ENCODE measurements at regions of chr6 and their contacts with region 1.

Region 1: GRCh38 chr6:170291271-170292110 is 613 bp upstream of the DLL1 start:
- DNase-seq: peak; percentile 69 to 75
- ATAC-seq: peak; percentile 23 to 63 (median 58)
- H3K4me3 ChIP-seq: peak overlapping the region; percentile 84
- H3K27ac ChIP-seq: peak overlapping the region; percentile 6
- H3K4me1 ChIP-seq: peaks cover 38% of the 10 kb centered on the region
- H3K27me3 ChIP-seq: peaks cover 0 to 87% (median 23%) of the 10 kb centered on the region in 3 donors
- CTCF ChIP-seq: no peak

Region 2: GRCh38 chr6:168648240-168649125 is 1643.0 kb before region 1 on chr6:
- intact Hi-C with region 1: no loop called
- DNase-seq: no peak
- ATAC-seq: peak in 1 of 4 donors; percentile 58
- H3K4me3 ChIP-seq: no peak overlapping the region
- H3K27ac ChIP-seq: no peak overlapping the region
- H3K4me1 ChIP-seq: no peaks in the 10 kb centered on the region
- H3K27me3 ChIP-seq: peaks cover 0 to 32% (median 2%) of the 10 kb centered on the region in 3 donors
- CTCF ChIP-seq: no peak

Region 3: GRCh38 chr6:169831450-169832246 is 459.8 kb before region 1 on chr6:
- intact Hi-C with region 1: loop called (anchors 1 to 5 kb)
- DNase-seq: peak; percentile 69 to 84
- ATAC-seq: peak; percentile 87 to 98 (median 93)
- H3K4me3 ChIP-seq: no peak overlapping the region
- H3K27ac ChIP-seq: no peak overlapping the region
- H3K4me1 ChIP-seq: no peaks in the 10 kb centered on the region
- H3K27me3 ChIP-seq: peaks cover 0 to 15% (median 0%) of the 10 kb centered on the region in 3 donors
- CTCF ChIP-seq: peak; percentile 94

Region 4: GRCh38 chr6:169959136-169960002 is 332.1 kb before region 1 on chr6:
- intact Hi-C with region 1: loop called (anchors 5 kb)
- DNase-seq: no peak
- ATAC-seq: no peak
- H3K4me3 ChIP-seq: no peak overlapping the region
- H3K27ac ChIP-seq: no peak overlapping the region
- H3K4me1 ChIP-seq: no peaks in the 10 kb centered on the region
- H3K27me3 ChIP-seq: peaks cover 0 to 33% (median 0%) of the 10 kb centered on the region in 3 donors
- CTCF ChIP-seq: no peak

Region 5: GRCh38 chr6:170039156-170040107 is 252.1 kb before region 1 on chr6:
- intact Hi-C with region 1: loop called in 1 of 2 experiments (anchors 5 kb)
- DNase-seq: peak in 1 of 2 donors; percentile 18
- ATAC-seq: no peak
- H3K4me3 ChIP-seq: no peak overlapping the region
- H3K27ac ChIP-seq: no peak overlapping the region
- H3K4me1 ChIP-seq: peaks cover 15% of the 10 kb centered on the region
- H3K27me3 ChIP-seq: no peaks in the 10 kb centered on the region
- CTCF ChIP-seq: no peak

Region 6: DNA sequence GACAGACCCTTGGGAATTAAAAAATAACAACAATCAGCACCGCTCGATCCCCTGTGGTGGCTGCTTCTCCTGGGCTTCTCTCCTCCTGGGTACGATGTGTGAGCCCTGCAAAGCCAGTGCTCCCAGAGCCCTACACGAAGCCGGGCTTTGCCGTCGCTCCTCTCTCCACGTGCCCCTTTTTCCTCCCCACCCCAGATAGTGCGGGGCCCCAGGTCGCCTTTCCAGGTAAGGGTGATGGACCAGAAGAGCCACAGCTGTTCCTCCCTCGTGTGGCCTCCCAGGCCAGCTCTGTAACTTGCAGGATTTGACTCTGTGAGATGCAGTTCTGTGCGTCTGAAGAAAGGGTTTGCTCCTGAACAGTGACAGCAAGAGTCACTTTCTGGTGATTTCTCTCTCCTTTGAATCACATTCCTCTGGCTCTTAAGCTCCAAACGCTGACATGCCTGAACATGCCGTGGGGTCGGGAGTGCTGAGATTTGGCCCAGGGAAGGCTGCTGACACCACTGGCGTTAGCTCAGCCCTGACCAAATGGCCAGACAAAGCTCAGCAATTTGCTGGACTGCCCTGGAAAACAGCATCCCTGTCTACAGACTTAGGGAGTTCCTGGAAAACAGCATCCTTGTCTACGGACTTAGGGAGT is 59.8 kb before region 1 on chr6:
- intact Hi-C with region 1: no loop called
- DNase-seq: no peak
- ATAC-seq: no peak
- H3K4me3 ChIP-seq: no peak overlapping the region
- H3K27ac ChIP-seq: no peak overlapping the region
- H3K4me1 ChIP-seq: peaks cover 23% of the 10 kb centered on the region
- H3K27me3 ChIP-seq: no peaks in the 10 kb centered on the region
- CTCF ChIP-seq: no peak

Measured in psoas muscle (tissue), 8 donors.